ENCODE measurements at regions of chr7 and their contacts with region 1.

Region 1: DNA sequence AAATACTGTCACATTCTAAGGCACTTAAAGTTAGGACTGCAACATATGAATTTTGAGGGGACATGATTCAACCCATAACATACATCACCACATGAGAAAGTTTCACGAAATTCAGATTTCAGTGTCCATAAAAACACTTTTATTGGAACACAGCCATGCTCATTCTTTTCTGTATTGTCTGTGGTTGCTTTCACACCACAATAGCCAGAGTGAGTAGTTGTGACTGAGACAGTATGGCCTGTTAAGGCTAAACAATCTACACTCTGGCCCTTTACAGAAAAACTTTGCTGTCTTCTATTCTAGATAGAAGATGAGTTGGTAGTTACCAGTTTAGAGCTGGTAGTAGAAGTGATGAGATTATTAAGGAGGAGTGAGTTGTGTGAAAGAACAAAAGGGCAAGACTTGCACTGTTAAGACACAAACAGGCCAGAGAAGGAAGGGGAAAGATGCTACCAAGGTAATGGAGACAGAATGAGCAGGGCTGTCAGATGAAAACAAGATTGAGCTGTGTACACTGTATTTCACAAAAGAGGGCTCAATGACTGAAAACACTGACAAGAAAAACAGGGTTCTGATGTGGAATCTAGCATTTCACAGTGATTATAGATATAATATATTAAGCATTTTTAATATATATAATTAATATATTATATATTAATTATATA is 108.6 kb downstream of the PPP1R3A start:
- DNase-seq: no peak
- H3K4me3 ChIP-seq: no peak overlapping the region
- H3K27ac ChIP-seq: no peak overlapping the region
- H3K4me1 ChIP-seq: no peaks in the 10 kb centered on the region
- H3K27me3 ChIP-seq: peaks cover 1% of the 10 kb centered on the region
- CTCF ChIP-seq: no peak

Region 2: GRCh38 chr7:113784316-113784715 is 25.9 kb before region 1 on chr7:
- CTCF ChIA-PET with region 1: no interaction called
- dilution Hi-C with region 1: no loop called
- in situ Hi-C with region 1: no loop called
- intact Hi-C with region 1: no loop called
- DNase-seq: no peak
- H3K4me3 ChIP-seq: no peak overlapping the region
- H3K27ac ChIP-seq: no peak overlapping the region
- H3K4me1 ChIP-seq: no peaks in the 10 kb centered on the region
- H3K27me3 ChIP-seq: no peaks in the 10 kb centered on the region
- CTCF ChIP-seq: no peak

Region 3: DNA sequence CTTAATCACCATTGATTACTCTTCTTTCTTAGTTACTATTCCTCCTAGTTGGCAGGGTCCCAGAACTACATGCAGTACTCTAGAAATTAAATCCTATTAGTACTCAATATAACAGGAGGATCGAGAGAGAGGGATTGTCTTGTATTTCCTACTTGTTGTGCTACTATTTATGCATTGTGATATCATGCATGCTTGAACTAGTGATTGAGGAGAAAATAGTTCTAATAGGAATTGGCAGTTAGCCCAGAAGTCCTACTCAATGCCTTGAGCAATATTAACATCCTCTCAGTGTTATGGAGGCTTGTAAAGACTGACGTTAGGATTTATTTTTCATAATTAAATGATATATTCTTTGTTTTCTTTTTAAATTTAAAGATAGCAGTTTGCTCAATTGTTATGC is 671.8 kb after region 1 on chr7:
- CTCF ChIA-PET with region 1: no interaction called
- dilution Hi-C with region 1: no loop called
- in situ Hi-C with region 1: no loop called
- intact Hi-C with region 1: loop called (anchors 5 kb)
- DNase-seq: peak; percentile 42
- H3K4me3 ChIP-seq: no peak overlapping the region
- H3K27ac ChIP-seq: no peak overlapping the region
- H3K4me1 ChIP-seq: no peaks in the 10 kb centered on the region
- H3K27me3 ChIP-seq: no peaks in the 10 kb centered on the region
- CTCF ChIP-seq: no peak

Measured in mammary epithelial cell (primary cell).